ENCODE measurements at regions of chr3 and their contacts with region 1.

Region 1: GRCh38 chr3:57397175-57398026 is 104.9 kb upstream of the ASB14 start:
- DNase-seq: peak; percentile 79
- ATAC-seq: peak; percentile 99
- H3K4me3 Mint-ChIP-seq: peak overlapping the region; percentile 7
- H3K27ac Mint-ChIP-seq: peak overlapping the region; percentile 48
- H3K4me1 Mint-ChIP-seq: peaks cover 14% of the 10 kb centered on the region
- H3K27me3 Mint-ChIP-seq: peaks cover 8% of the 10 kb centered on the region

Region 2: GRCh38 chr3:57100046-57100695 is 297.2 kb before region 1 on chr3:
- CTCF ChIA-PET with region 1: interaction called, 5 read pairs
- POLR2A ChIA-PET with region 1: no interaction called
- intact Hi-C with region 1: loop called in 1 of 2 experiments (anchors 1 kb)
- DNase-seq: peak; percentile 81
- ATAC-seq: peak; percentile 94
- H3K4me3 Mint-ChIP-seq: no peak overlapping the region
- H3K27ac Mint-ChIP-seq: no peak overlapping the region
- H3K4me1 Mint-ChIP-seq: peaks cover 3% of the 10 kb centered on the region
- H3K27me3 Mint-ChIP-seq: peaks cover 2% of the 10 kb centered on the region

Region 3: GRCh38 chr3:57382933-57383332 is 14.5 kb before region 1 on chr3:
- CTCF ChIA-PET with region 1: interaction called, 13 read pairs
- POLR2A ChIA-PET with region 1: no interaction called
- intact Hi-C with region 1: no loop called
- DNase-seq: no peak
- ATAC-seq: no peak
- H3K4me3 Mint-ChIP-seq: no peak overlapping the region
- H3K27ac Mint-ChIP-seq: no peak overlapping the region
- H3K4me1 Mint-ChIP-seq: no peaks in the 10 kb centered on the region
- H3K27me3 Mint-ChIP-seq: peaks cover 4% of the 10 kb centered on the region

Region 4: GRCh38 chr3:57434041-57434440 is 36.6 kb after region 1 on chr3:
- CTCF ChIA-PET with region 1: interaction called, 15 read pairs
- POLR2A ChIA-PET with region 1: no interaction called
- intact Hi-C with region 1: no loop called
- DNase-seq: no peak
- ATAC-seq: no peak
- H3K4me3 Mint-ChIP-seq: no peak overlapping the region
- H3K27ac Mint-ChIP-seq: no peak overlapping the region
- H3K4me1 Mint-ChIP-seq: no peaks in the 10 kb centered on the region
- H3K27me3 Mint-ChIP-seq: peaks cover 3% of the 10 kb centered on the region

Region 5: GRCh38 chr3:57646723-57647122 is 249.3 kb after region 1 on chr3:
- CTCF ChIA-PET with region 1: no interaction called
- POLR2A ChIA-PET with region 1: no interaction called
- intact Hi-C with region 1: loop called in 1 of 2 experiments (anchors 10 kb)
- DNase-seq: no peak
- ATAC-seq: peak; percentile 39
- H3K4me3 Mint-ChIP-seq: no peak overlapping the region
- H3K27ac Mint-ChIP-seq: no peak overlapping the region
- H3K4me1 Mint-ChIP-seq: peaks cover 9% of the 10 kb centered on the region
- H3K27me3 Mint-ChIP-seq: no peaks in the 10 kb centered on the region

Region 6: DNA sequence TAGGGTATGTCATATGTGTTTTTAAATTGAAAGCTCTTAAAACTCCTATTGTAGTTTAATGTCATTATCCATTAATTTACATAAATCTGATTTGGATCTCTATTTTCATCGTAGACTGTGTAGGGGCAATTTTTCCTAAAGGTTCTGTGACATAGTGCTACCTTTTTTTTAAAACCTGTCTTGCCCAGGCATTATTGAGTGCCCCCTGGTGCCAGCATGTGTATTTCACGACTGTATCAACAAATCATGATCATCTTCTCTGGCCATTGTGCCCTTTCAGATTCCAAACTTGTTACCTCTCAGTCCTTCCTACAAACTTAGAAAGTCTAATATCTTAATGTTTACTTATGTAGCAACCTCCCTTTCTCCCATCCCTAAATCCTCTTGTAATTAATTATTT is 513.6 kb after region 1 on chr3:
- CTCF ChIA-PET with region 1: interaction called, 6 read pairs
- POLR2A ChIA-PET with region 1: no interaction called
- intact Hi-C with region 1: loop called in 1 of 2 experiments (anchors 10 kb)
- DNase-seq: peak; percentile 43
- ATAC-seq: peak; percentile 39
- H3K4me3 Mint-ChIP-seq: no peak overlapping the region
- H3K27ac Mint-ChIP-seq: no peak overlapping the region
- H3K4me1 Mint-ChIP-seq: no peaks in the 10 kb centered on the region
- H3K27me3 Mint-ChIP-seq: no peaks in the 10 kb centered on the region